Sciatic nerve (tissue), 2 donors: ENCODE measurements at regions of chr19 and their contacts with region 1.

Region 1: DNA sequence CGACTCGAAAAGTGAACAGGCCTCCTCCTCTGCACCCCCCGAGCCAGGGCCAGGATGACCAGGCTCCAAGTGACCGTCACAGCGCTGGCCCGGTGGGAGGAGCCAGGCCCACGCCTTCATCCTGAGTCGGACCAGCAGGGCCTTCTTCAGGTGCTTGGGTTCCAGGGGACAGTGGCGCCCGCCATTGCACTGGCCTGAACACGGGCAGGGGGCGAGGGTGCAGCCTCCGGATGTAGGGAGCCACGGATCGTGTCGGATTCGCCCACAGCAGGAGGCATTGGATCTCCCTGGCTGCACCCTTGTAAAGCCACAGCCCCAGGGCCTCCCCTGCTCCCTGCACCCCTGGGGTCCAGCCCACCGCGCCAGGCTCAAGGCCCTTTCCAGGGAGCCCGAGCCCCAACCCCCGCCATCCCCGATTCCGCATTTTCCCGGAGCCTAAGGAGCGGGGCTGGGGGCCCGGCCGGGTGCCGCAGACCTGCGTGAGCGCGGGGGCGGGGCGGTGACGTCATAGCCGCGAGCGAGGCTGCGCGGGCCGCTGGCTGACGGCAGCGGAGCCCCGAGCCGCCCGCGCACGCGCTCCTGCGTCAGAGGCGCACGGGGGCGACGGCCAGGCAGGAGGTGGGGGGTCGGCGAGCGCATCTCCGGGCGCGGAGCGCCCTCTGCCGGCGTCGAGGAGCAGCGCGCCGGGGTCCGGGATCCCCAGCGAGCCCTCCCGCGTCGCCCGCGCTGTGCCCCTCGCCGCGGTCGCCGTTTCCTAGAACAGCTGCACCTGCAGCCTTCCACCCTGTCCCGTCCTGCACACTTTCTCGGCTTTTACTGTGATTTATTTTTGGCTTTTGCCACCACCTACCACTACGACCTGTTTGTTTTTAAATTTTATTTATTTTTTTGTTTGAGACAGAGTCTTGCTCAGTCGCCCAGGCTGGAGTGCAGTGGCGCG is 1.5 kb upstream of the ATP5F1D start:
- DNase-seq: peak; percentile 97
- ATAC-seq: peak; percentile 56

Region 2: GRCh38 chr19:934865-935479 is 305.1 kb before region 1 on chr19:
- intact Hi-C with region 1: loop called (anchors 5 kb)
- DNase-seq: peak; percentile 87
- ATAC-seq: peak; percentile 79

Region 3: DNA sequence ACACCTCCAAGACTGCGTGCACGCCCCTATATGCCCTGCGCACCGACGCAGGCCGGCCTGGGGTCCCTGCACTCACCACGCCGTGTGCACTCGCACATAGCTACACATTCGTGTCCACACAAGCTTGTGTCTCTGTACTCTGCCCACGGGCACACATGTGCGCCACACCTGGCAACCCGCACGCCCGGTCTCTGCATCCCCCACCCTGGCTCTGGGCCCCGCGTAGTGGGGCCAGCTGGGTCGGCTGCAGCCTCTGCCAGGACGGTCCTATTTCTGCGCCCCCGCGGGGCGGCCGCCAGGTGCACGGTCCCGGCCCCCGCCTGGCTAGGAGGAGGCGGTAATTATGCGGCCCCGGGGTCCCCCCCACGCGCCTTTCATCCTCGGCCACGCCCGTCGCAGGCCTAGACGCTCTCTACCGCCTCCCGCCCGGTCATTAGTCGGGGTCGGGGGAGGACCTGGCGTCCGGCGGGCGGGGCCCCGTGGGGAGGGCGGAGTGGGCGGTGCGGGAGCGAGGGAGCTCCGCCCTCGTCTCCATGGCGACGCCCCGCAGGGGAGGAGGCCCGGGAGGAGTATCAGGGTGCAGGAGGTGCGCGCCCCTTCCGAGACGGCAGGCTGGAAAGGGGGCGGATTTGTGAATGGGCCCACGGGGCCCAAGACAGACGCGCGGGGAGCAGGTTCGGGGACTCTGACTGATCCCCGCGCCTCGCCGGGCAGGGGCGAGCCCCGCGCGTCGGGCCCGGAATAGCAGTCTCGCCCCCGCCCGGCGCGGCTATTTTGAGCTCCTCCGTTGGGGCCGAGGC is 26.2 kb after region 1 on chr19:
- intact Hi-C with region 1: loop called (anchors 2 kb)
- DNase-seq: peak; percentile 92
- ATAC-seq: peak; percentile 23